ENCODE measurements at regions of chr7 and their contacts with region 1.

Region 1: GRCh38 chr7:107168233-107169119 is at the start of gene HBP1:
- DNase-seq: peak; percentile 97 to 100 (median 99)
- H3K4me3 ChIP-seq: peak within 1 kb of the TSS; percentile 84 to 85
- H3K4me3 Mint-ChIP-seq: peak within 1 kb of the TSS; percentile 90 to 100 (median 97)
- H3K27ac ChIP-seq: peak within 1 kb of the TSS; percentile 100
- H3K27ac Mint-ChIP-seq: peak within 1 kb of the TSS; percentile 98 to 100 (median 100)
- H3K4me1 ChIP-seq: peaks cover 44% of the 10 kb centered on the region
- H3K4me1 Mint-ChIP-seq: peaks cover 22 to 53% (median 37%) of the 10 kb centered on the region in 4 donors
- H3K27me3 ChIP-seq: no peaks in the 10 kb centered on the region
- H3K27me3 Mint-ChIP-seq: peaks cover 1 to 3% of the 10 kb centered on the region in 2 donors
- total RNA-seq, gene HBP1: 111 to 116 TPM

Region 2: GRCh38 chr7:106112117-106112971 is 1056.1 kb before region 1 on chr7 and contains the start of gene SYPL1:
- CTCF ChIA-PET with region 1: no interaction called
- POLR2A ChIA-PET with region 1: no interaction called
- intact Hi-C with region 1: loop called (anchors 5 kb)
- DNase-seq: peak; percentile 91 to 93 (median 92)
- H3K4me3 ChIP-seq: peak within 1 kb of the TSS; percentile 60 to 76
- H3K4me3 Mint-ChIP-seq: peak within 1 kb of the TSS; percentile 88 to 96 (median 92)
- H3K27ac ChIP-seq: peak within 1 kb of the TSS; percentile 69
- H3K27ac Mint-ChIP-seq: peak within 1 kb of the TSS; percentile 84 to 98 (median 97)
- H3K4me1 ChIP-seq: peaks cover 52% of the 10 kb centered on the region
- H3K4me1 Mint-ChIP-seq: peaks cover 53 to 75% (median 65%) of the 10 kb centered on the region in 4 donors
- H3K27me3 ChIP-seq: no peaks in the 10 kb centered on the region
- H3K27me3 Mint-ChIP-seq: no peaks in the 10 kb centered on the region
- total RNA-seq, gene SYPL1: 46.9 to 47.9 TPM

Region 3: DNA sequence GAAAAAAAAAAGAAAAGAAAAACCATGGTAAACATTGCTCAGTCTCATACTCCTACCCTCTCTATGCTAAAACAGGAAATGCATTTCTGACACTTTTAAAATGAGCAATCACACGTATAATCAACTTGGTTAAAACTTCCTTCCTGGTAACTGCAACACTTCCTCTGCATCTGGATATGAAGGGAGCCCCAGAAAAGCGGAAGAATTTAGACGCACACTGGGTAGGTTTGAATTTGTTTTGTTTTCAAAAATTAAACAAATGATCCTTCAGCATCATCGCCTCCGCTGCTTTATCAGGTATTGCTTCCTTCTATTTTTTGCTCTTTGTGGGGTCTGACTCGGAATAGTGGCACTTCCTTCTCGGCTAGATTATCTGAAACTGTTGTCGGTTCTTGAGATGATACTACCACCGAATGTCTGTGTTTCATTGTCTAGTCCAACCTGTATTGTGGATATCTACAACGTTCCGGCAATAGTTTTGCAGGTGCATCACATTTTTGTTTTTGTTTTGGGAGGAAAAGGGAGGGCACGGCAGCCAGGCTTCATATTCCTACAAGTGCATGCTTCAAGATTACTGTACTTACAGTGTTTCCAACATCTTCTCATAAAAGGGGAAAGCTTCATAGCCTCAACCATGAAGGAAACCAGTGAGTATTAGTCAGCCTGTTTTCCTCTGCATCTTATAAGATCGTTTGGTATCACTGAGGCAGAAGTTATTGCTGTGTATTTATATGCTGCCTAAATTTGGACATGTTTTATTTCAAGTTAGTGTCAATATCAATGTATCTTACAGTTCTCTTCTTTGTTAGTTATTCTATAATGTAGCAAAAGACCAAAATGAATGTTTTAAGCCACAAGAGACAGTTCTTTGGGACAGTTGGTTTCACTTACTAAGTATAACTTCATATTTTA is 303.1 kb before region 1 on chr7 and contains the start of gene PIK3CG:
- CTCF ChIA-PET with region 1: no interaction called
- POLR2A ChIA-PET with region 1: interaction called, 46 read pairs
- intact Hi-C with region 1: loop called (anchors 1 kb)
- DNase-seq: peak; percentile 58 to 77 (median 66)
- H3K4me3 ChIP-seq: peak within 1 kb of the TSS; percentile 68 to 83
- H3K4me3 Mint-ChIP-seq: peak within 1 kb of the TSS; percentile 90 to 97 (median 93)
- H3K27ac ChIP-seq: peak within 1 kb of the TSS; percentile 66
- H3K27ac Mint-ChIP-seq: peak within 1 kb of the TSS; percentile 88 to 95 (median 92)
- H3K4me1 ChIP-seq: peaks cover 67% of the 10 kb centered on the region
- H3K4me1 Mint-ChIP-seq: peaks cover 57 to 87% (median 69%) of the 10 kb centered on the region in 4 donors
- H3K27me3 ChIP-seq: no peaks in the 10 kb centered on the region
- H3K27me3 Mint-ChIP-seq: no peaks in the 10 kb centered on the region
- total RNA-seq, gene PIK3CG: 32.3 to 32.6 TPM

Region 4: DNA sequence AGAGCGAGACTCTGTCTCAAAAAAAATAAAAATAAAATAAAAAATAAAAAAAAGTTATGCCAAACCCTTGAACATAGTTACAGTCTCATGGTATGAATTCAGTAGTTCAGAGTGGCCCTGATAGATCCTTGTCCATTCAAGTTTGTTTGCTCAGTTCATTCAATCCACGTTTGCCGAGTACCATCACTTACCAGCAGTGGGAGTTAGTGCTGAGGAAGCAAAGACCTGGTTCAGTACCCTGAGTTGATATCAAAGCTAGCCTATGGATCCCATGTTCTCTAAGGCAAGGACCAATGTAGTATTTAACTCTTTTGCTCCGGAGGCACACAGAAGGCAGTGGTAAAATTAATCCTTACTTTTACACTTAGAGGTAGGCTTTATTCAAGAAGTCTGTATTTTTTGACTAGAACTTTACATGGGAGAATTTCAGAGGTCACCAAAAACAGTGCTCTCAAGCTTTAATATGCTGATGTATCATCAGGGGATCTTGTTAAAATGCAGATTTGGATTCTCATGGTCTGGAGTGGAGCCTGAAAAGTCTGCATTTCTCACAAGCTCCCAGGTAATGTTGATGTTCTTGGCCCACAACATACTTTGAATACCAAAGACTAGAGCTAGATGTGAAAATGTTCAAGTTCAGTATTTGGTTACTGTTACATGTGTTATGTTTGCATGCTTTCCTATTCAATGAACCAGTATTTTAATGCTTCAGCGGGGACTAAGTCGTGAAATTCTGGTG is 37.8 kb before region 1 on chr7:
- CTCF ChIA-PET with region 1: interaction called, 6 read pairs
- POLR2A ChIA-PET with region 1: interaction called, 38 read pairs
- intact Hi-C with region 1: loop called (anchors 2 kb)
- DNase-seq: no peak
- H3K4me3 ChIP-seq: no peak overlapping the region
- H3K4me3 Mint-ChIP-seq: no peak overlapping the region
- H3K27ac ChIP-seq: no peak overlapping the region
- H3K27ac Mint-ChIP-seq: no peak overlapping the region
- H3K4me1 ChIP-seq: peaks cover 11% of the 10 kb centered on the region
- H3K4me1 Mint-ChIP-seq: peaks cover 10 to 16% (median 13%) of the 10 kb centered on the region in 4 donors
- H3K27me3 ChIP-seq: no peaks in the 10 kb centered on the region
- H3K27me3 Mint-ChIP-seq: peaks cover 0 to 3% of the 10 kb centered on the region in 2 donors

Region 5: GRCh38 chr7:107187774-107188173 is 19.3 kb after region 1 on chr7:
- CTCF ChIA-PET with region 1: interaction called, 3 read pairs
- POLR2A ChIA-PET with region 1: interaction called, 70 read pairs
- intact Hi-C with region 1: no loop called
- DNase-seq: no peak
- H3K4me3 ChIP-seq: no peak overlapping the region
- H3K4me3 Mint-ChIP-seq: no peak overlapping the region
- H3K27ac ChIP-seq: no peak overlapping the region
- H3K27ac Mint-ChIP-seq: peak overlapping the region in 4 of 7 donors; percentile 2 to 51 (median 20)
- H3K4me1 ChIP-seq: no peaks in the 10 kb centered on the region
- H3K4me1 Mint-ChIP-seq: peaks cover 16 to 21% (median 19%) of the 10 kb centered on the region in 4 donors
- H3K27me3 ChIP-seq: no peaks in the 10 kb centered on the region
- H3K27me3 Mint-ChIP-seq: no peaks in the 10 kb centered on the region

Region 6: DNA sequence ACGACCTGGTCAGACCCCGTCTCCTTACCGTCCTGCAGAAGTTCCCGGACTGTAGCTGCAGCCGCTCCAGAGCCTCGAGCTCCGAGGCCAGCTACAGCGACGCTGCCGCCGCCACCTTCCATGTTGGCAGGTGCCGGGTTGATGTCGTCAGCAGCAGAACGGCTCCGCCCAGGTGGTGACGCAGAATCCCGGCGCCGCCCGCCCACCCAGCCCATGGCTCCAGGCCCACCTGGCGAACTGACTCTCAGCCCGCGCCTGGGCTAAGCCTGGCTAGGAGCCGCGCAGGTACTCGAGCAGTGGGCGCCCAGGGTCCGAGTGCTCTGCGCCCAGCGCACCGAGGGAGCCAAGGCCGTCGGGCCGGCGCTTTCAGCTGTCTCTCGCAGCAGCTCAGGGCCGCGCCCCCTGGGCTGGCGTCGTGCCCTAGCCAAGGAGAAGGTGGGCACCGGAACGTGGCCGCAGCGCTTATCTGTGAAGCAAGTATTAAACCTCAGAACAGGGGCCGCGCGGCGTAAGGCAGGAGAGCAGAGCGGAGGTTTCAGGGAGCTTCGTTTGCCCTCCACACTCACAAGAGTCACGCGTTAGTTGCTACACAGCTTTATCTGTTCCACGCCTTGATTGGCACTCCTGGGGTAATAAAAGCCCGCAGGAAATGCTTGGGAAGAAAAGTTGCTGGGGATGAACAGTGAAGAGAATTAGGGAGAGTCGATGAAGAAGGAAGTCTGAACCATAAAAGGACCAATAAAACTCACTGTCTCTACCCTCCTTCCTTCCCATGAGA is 395.5 kb after region 1 on chr7 and contains the starts of genes COG5 and DUS4L:
- CTCF ChIA-PET with region 1: no interaction called
- POLR2A ChIA-PET with region 1: interaction called, 21 read pairs
- intact Hi-C with region 1: loop called (anchors 1 kb)
- DNase-seq: peak; percentile 83 to 86 (median 85)
- H3K4me3 ChIP-seq: peak within 1 kb of the TSS; percentile 76 to 85
- H3K4me3 Mint-ChIP-seq: peak within 1 kb of the TSS; percentile 85 to 95 (median 90)
- H3K27ac ChIP-seq: peak within 1 kb of the TSS; percentile 97
- H3K27ac Mint-ChIP-seq: peak within 1 kb of the TSS; percentile 92 to 99 (median 97)
- H3K4me1 ChIP-seq: peaks cover 56% of the 10 kb centered on the region
- H3K4me1 Mint-ChIP-seq: peaks cover 50 to 66% (median 58%) of the 10 kb centered on the region in 4 donors
- H3K27me3 ChIP-seq: no peaks in the 10 kb centered on the region
- H3K27me3 Mint-ChIP-seq: no peaks in the 10 kb centered on the region
- total RNA-seq, gene COG5: 85.0 to 87.8 TPM
- total RNA-seq, gene DUS4L: 10.9 to 11.3 TPM

Region 7: DNA sequence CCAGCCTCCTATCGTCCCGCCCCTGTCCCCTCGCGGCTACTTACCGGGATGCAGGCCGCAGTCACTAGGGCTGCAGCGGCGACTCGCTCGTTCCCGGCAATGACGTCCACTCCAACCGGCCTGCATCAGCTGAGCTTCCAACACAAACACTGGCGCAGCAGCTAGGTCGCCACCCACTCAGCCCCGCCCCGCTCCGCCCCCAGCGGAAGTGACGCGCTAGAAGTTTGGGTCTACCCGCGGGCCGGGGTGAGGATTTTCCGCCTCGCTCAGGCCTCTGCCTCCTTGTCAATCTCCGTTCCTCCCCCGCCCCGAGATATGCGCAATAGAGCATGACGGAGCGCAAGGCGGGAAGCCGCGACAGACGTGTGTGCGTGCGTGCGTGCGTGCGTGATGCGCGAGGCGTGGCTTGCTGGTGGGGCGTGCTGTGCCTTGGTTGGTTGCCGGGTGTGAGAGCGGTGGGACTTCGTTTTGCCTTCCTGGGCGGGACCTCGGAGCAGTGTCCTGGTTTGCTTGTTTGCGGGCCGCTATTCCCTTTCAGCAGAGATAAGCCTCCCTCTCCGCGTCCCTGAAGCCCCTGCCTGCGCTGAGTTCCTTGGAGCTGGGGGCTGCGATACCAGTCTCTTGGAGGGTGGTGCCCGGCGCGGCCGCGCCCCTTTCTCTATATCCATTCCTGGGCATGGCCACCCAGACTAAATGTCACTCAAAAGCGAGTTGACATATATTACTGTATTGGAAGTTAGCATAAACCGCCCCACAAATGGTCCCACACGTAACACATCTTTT is 1357.7 kb after region 1 on chr7 and contains the start of gene PNPLA8:
- CTCF ChIA-PET with region 1: no interaction called
- POLR2A ChIA-PET with region 1: interaction called, 4 read pairs
- intact Hi-C with region 1: loop called (anchors 1 kb)
- DNase-seq: peak; percentile 100
- H3K4me3 ChIP-seq: peak within 1 kb of the TSS; percentile 52 to 81
- H3K4me3 Mint-ChIP-seq: peak within 1 kb of the TSS; percentile 90 to 98 (median 96)
- H3K27ac ChIP-seq: peak within 1 kb of the TSS; percentile 98
- H3K27ac Mint-ChIP-seq: peak within 1 kb of the TSS; percentile 99 to 100 (median 100)
- H3K4me1 ChIP-seq: peaks cover 38% of the 10 kb centered on the region
- H3K4me1 Mint-ChIP-seq: peaks cover 30 to 58% (median 39%) of the 10 kb centered on the region in 4 donors
- H3K27me3 ChIP-seq: no peaks in the 10 kb centered on the region
- H3K27me3 Mint-ChIP-seq: no peaks in the 10 kb centered on the region
- total RNA-seq, gene PNPLA8: 28.0 to 28.9 TPM

Measured in CD4-positive, alpha-beta memory T cell (primary cell).